ENCODE measurements at regions of chr3 and their contacts with region 1.

Region 1: GRCh38 chr3:46488735-46489361 is 8.9 kb upstream of the RTP3 start:
- H3K4me3 ChIP-seq: no peak overlapping the region
- H3K27ac ChIP-seq: no peak overlapping the region
- H3K4me1 ChIP-seq: no peaks in the 10 kb centered on the region
- CTCF ChIP-seq: peak; percentile 97

Region 2: DNA sequence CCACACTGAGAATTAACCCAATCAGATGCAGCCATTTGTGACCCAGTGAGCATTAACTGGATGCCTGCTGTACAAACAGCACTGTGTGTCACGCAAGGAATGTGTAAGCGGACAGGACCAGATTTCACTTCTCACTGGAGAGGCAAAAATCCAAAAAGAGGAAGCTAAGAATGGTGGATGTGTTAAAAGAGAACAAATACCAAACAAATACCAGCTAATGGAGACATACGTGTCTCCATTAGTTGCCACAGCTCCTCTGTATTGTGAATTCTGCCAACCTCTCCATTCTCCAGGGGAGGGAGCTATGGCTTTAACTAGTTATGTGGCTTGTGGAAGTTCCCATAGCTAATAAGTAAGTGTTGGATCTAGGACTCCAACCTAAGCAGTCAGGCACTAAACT is 26.7 kb before region 1 on chr3:
- CTCF ChIA-PET with region 1: interaction called, 12 read pairs
- POLR2A ChIA-PET with region 1: no interaction called
- H3K4me3 ChIP-seq: no peak overlapping the region
- H3K27ac ChIP-seq: no peak overlapping the region
- H3K4me1 ChIP-seq: no peaks in the 10 kb centered on the region
- CTCF ChIP-seq: no peak

Region 3: GRCh38 chr3:46468753-46469600 is 19.9 kb before region 1 on chr3:
- CTCF ChIA-PET with region 1: interaction called, 20 read pairs
- POLR2A ChIA-PET with region 1: no interaction called
- H3K4me3 ChIP-seq: no peak overlapping the region
- H3K27ac ChIP-seq: no peak overlapping the region
- H3K4me1 ChIP-seq: no peaks in the 10 kb centered on the region
- CTCF ChIP-seq: no peak

Region 4: DNA sequence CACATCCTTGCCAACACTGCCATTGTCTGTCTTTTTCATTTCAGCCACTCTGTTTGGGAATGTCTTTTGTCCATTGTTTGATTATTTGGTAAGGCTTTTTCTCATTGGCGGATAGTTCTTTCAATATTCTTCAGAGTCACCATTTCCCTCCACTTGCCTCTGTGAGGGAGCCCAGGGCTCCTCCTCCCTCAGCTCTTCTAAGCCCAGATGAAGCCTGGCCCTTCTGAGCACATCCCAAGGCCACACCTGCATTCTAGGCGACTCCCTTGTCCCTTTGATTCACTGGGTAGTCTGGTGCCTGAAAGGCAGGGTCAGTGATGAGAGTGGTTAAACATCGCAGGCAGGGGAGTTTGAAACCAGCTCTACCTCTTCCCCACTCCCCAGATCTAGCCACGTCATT is 11.7 kb before region 1 on chr3:
- CTCF ChIA-PET with region 1: interaction called, 20 read pairs
- POLR2A ChIA-PET with region 1: no interaction called
- H3K4me3 ChIP-seq: no peak overlapping the region
- H3K27ac ChIP-seq: no peak overlapping the region
- H3K4me1 ChIP-seq: no peaks in the 10 kb centered on the region
- CTCF ChIP-seq: no peak

Region 5: GRCh38 chr3:46558184-46559043 is 69.6 kb after region 1 on chr3:
- CTCF ChIA-PET with region 1: interaction called, 71 read pairs
- POLR2A ChIA-PET with region 1: no interaction called
- H3K4me3 ChIP-seq: peak overlapping the region; percentile 18
- H3K27ac ChIP-seq: no peak overlapping the region
- H3K4me1 ChIP-seq: no peaks in the 10 kb centered on the region
- CTCF ChIP-seq: peak; percentile 51

Region 6: GRCh38 chr3:46629551-46630517 is 141.0 kb after region 1 on chr3:
- CTCF ChIA-PET with region 1: interaction called, 29 read pairs
- POLR2A ChIA-PET with region 1: no interaction called
- H3K4me3 ChIP-seq: no peak overlapping the region
- H3K27ac ChIP-seq: no peak overlapping the region
- H3K4me1 ChIP-seq: no peaks in the 10 kb centered on the region
- CTCF ChIP-seq: no peak

Region 7: GRCh38 chr3:46909535-46910442 is 420.9 kb after region 1 on chr3:
- CTCF ChIA-PET with region 1: interaction called, 10 read pairs
- POLR2A ChIA-PET with region 1: no interaction called
- H3K4me3 ChIP-seq: no peak overlapping the region
- H3K27ac ChIP-seq: no peak overlapping the region
- H3K4me1 ChIP-seq: peaks cover 5% of the 10 kb centered on the region; the same call in 1 of the 2 replicates
- CTCF ChIP-seq: peak; percentile 78